ENCODE measurements at regions of chr6 and their contacts with region 1.

Region 1: GRCh38 chr6:134640975-134641429 is 308.9 kb downstream of the ALDH8A1 start:
- DNase-seq: peak; percentile 91
- H3K4me3 Mint-ChIP-seq: no peak overlapping the region
- H3K27ac Mint-ChIP-seq: peak overlapping the region; percentile 57
- H3K4me1 Mint-ChIP-seq: peaks cover 34% of the 10 kb centered on the region
- H3K27me3 Mint-ChIP-seq: no peaks in the 10 kb centered on the region

Region 2: GRCh38 chr6:134123666-134124208 is 517.3 kb before region 1 on chr6:
- CTCF ChIA-PET with region 1: interaction called, 5 read pairs
- intact Hi-C with region 1: loop called (anchors 1 kb)
- DNase-seq: no peak
- H3K4me3 Mint-ChIP-seq: no peak overlapping the region
- H3K27ac Mint-ChIP-seq: no peak overlapping the region
- H3K4me1 Mint-ChIP-seq: no peaks in the 10 kb centered on the region
- H3K27me3 Mint-ChIP-seq: no peaks in the 10 kb centered on the region

Region 3: DNA sequence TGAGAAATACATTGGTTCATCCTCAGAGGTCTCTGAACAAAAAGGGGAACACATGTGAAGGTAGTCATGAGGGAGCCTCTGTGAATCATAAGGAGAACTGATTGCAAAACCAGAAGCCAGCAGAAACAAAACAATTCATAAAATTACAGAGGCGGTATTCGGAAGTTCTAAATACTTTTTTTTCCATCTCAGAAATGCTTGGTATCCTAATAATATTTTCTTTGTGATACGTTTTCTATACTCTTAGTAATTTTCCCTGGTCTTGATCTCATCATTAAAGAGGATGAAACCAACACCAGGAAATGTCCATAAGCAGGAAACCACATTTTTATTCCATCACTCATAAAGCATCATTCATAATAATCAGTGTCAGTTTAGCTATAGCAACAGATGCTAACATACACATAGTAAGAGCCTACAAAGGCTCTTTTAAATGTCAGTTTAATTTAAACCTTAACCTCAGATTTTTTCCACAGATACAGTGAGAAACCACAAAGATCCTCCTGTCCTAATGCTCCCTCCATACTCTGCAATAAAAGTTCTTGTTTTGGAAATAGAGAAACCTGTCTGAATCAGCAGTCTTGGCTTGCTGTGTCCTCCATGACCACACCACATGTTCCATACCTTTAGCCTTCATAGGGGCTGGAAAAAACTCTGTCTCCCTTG is 352.3 kb before region 1 on chr6:
- CTCF ChIA-PET with region 1: interaction called, 3 read pairs
- intact Hi-C with region 1: loop called (anchors 1 kb)
- DNase-seq: no peak
- H3K4me3 Mint-ChIP-seq: peak overlapping the region; percentile 45
- H3K27ac Mint-ChIP-seq: peak overlapping the region; percentile 90
- H3K4me1 Mint-ChIP-seq: peaks cover 28% of the 10 kb centered on the region
- H3K27me3 Mint-ChIP-seq: no peaks in the 10 kb centered on the region

Region 4: DNA sequence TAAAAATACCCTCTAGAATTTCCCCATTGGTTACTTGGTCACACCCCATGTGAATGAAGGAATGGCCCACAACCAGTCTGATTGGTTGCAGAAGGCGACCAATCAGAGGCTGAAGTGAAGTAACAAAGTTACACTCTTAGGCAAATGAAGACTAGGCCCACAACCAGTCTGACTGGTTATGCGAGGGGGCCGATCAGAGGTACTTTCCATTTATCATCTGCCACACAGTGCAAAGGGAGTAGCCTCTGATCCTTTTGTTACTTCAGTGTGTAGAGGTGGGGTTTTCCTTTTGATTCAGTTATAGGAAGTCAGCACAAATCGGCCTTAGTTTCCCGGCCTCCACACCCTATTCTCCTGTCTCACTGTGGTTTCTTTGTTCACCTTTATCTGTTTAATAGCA is 261.9 kb before region 1 on chr6:
- CTCF ChIA-PET with region 1: no interaction called
- intact Hi-C with region 1: loop called (anchors 1 kb)
- DNase-seq: peak; percentile 87
- H3K4me3 Mint-ChIP-seq: peak overlapping the region; percentile 35
- H3K27ac Mint-ChIP-seq: peak overlapping the region; percentile 84
- H3K4me1 Mint-ChIP-seq: peaks cover 40% of the 10 kb centered on the region
- H3K27me3 Mint-ChIP-seq: no peaks in the 10 kb centered on the region

Region 5: DNA sequence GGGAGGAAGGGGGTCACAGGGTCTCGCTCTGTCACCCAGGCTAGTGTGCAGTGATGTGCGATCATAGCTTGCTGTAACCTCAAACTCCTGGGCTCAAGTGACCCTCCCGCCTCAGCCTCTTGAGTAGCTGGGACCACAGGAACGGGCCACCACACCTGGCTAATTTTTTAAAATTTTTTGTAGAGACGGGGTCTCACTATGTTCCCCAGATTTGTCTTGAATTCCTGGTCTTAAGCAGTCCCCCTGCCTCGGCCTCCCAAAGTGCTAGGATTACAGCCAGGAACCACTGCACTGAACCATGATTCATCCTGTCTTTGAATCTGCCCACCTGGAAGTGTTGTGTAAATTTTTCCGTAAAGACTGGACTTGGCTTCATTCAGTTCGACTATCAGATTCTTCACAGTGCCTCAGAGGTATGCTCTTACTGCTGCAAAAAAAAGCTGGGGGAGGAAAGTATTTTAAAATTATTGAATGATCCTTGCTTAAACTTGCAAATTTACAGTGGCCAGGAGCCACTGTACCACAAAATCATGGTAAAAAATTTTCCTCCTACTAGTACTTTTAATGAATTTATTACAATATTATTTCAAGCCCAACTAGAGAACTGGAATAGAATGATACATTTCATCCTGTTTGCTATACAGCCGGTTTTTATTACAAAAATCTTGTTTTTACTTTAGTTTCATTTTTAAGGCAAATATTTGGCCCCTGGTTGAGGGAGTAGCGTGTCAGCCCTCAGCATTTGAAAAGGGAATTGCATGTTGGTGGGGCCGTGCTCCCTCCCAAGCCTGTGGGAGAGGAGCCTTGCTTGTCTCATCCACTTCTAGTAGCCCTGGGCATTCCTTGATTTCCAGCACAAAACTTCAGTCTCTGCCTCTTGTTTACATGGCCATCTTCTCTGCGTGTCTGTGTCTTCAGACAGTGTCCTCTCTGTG is 120.6 kb before region 1 on chr6:
- CTCF ChIA-PET with region 1: interaction called, 4 read pairs
- intact Hi-C with region 1: loop called (anchors 5 kb)
- DNase-seq: no peak
- H3K4me3 Mint-ChIP-seq: no peak overlapping the region
- H3K27ac Mint-ChIP-seq: peak overlapping the region; percentile 56
- H3K4me1 Mint-ChIP-seq: peaks cover 57% of the 10 kb centered on the region
- H3K27me3 Mint-ChIP-seq: no peaks in the 10 kb centered on the region

Region 6: GRCh38 chr6:134698228-134698627 is 57.2 kb after region 1 on chr6:
- CTCF ChIA-PET with region 1: no interaction called
- intact Hi-C with region 1: no loop called
- DNase-seq: no peak
- H3K4me3 Mint-ChIP-seq: no peak overlapping the region
- H3K27ac Mint-ChIP-seq: no peak overlapping the region
- H3K4me1 Mint-ChIP-seq: no peaks in the 10 kb centered on the region
- H3K27me3 Mint-ChIP-seq: peaks cover 5% of the 10 kb centered on the region

Region 7: DNA sequence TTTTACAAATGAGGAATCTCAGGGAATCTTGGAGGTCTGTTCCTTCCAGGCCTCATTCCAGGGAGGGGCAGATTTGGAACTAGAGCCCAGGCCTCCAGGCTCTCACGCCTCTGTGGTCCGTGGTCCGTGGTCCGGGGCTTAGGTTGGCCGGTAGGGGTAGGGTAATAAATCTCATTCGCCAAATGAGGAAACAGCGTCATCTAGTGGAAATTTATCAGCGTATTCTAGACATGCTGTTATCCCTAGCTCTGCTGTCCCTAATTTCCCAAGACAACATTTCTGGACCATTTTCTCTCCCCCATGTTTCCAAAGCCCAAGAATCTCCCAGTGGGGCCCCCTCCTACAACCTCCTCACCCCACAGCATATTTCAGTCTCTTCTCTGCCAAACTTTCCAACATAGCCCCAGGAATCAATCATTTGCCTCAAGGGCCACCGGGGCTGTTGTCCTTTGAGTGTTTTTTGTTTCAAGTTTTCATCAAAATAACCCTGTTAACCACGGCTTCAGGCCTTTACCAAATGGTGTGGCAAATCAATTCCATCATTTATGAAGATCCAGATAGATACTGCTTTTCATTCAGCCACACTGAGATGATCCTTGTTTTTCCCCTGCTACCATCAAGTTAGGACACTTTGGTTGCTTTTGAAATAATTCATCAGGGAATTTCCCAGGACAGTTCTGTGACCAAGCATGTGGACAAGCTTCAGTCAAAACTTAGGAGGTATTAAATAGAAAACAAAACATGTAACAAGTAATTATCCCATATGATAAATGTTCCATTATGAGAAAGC is 182.1 kb after region 1 on chr6:
- CTCF ChIA-PET with region 1: interaction called, 4 read pairs
- intact Hi-C with region 1: loop called (anchors 1 kb)
- DNase-seq: peak; percentile 39
- H3K4me3 Mint-ChIP-seq: no peak overlapping the region
- H3K27ac Mint-ChIP-seq: no peak overlapping the region
- H3K4me1 Mint-ChIP-seq: no peaks in the 10 kb centered on the region
- H3K27me3 Mint-ChIP-seq: no peaks in the 10 kb centered on the region

Region 8: DNA sequence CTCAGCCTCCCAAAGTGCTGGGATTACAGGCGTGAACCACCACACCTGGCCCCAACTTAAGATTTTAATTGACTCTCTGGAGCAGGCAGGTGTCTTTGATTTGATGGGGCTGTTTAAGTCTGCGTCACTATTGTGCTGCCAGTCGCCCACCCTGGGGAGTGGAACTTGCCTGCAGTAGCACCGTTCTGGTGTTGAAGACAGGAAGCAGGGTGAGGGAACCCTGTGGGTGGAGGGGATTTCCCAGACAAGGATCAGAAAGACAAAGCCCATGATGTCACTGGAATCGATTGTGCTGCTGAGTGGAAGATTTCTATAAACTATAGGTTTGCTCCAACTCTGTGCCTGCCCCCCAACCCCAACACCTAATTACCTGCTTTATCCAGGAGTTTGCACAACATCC is 297.9 kb after region 1 on chr6:
- CTCF ChIA-PET with region 1: interaction called, 17 read pairs
- intact Hi-C with region 1: loop called (anchors 5 kb)
- DNase-seq: peak; percentile 85
- H3K4me3 Mint-ChIP-seq: no peak overlapping the region
- H3K27ac Mint-ChIP-seq: no peak overlapping the region
- H3K4me1 Mint-ChIP-seq: peaks cover 21% of the 10 kb centered on the region
- H3K27me3 Mint-ChIP-seq: no peaks in the 10 kb centered on the region

Region 9: GRCh38 chr6:136599329-136600011 is 1958.5 kb after region 1 on chr6:
- CTCF ChIA-PET with region 1: no interaction called
- intact Hi-C with region 1: no loop called
- DNase-seq: no peak
- H3K4me3 Mint-ChIP-seq: no peak overlapping the region
- H3K27ac Mint-ChIP-seq: no peak overlapping the region
- H3K4me1 Mint-ChIP-seq: peaks cover 4% of the 10 kb centered on the region
- H3K27me3 Mint-ChIP-seq: no peaks in the 10 kb centered on the region

Measured in activated naive CD4-positive, alpha-beta T cell treated with anti-CD3 and anti-CD28 coated beads for 36 hours (primary cell).